A673 (cell line): ENCODE measurements at regions of chr4 and their contacts with region 1.

Region 1: DNA sequence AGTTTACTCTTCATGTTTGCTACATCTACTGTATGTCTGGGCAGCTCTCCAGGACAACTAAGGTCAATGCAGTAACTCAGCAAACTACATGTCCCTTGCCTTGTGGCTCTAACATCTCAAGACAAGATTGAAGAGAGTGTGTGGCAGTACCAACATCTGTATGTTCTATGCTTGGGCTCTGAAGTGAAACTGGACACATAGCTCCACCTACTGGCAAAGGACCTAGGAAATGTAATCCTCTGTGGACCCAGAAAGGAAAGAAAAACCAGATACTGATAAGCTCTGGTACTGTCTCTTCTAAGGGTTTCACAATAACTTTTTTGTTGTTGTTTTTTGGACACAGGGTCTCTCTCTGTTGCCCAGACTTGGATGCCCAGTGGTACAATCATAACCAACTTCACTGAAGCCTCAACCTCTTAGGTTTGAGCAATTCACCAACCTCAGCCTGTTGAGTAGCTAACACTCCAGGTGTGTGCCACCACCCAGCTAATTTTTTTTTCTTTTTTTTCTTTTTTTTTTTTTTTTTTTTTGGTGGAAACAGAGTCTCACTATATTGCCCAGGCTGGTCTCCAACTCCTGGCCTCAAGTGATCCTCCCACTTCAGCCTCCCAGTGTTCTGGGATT is 64.1 kb downstream of the QDPR start:
- DNase-seq: peak; percentile 86
- H3K4me3 ChIP-seq: no peak overlapping the region
- H3K27ac ChIP-seq: no peak overlapping the region
- H3K4me1 ChIP-seq: no peaks in the 10 kb centered on the region
- H3K27me3 ChIP-seq: no peaks in the 10 kb centered on the region
- CTCF ChIP-seq: peak; percentile 82

Region 2: DNA sequence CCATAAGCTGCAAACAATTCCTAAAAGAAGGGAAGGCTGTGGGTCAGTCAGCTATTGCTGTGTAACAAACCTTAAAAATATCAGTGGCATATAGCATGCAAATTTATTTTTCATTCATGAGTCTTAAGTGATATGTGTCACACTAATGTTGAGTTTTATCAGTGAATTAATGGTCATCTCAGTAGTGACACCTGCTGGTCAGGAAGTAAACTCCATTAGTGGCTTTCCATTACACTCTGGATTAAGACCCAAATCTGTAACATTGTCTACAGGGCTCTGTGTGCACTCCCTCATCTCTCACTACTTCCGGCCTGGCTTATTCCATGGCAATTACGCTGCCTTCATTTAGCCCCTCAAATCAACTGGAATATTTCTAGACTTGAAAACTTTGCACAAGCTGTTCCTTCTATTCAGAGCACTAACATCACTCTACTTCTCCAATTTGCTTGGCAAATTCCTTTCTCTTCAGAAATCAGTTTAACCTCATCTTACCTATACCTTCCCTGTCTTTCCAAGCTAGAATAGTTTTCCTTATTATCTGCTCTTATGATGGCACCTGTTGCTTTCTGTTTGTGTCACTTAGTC is 1004.2 kb before region 1 on chr4:
- CTCF ChIA-PET with region 1: no interaction called
- POLR2A ChIA-PET with region 1: interaction called, 3 read pairs
- intact Hi-C with region 1: loop called (anchors 10 kb)
- DNase-seq: peak; percentile 74
- H3K4me3 ChIP-seq: no peak overlapping the region
- H3K27ac ChIP-seq: no peak overlapping the region
- H3K4me1 ChIP-seq: no peaks in the 10 kb centered on the region
- H3K27me3 ChIP-seq: no peaks in the 10 kb centered on the region
- CTCF ChIP-seq: peak; percentile 74

Region 3: GRCh38 chr4:16785793-16786527 is 661.8 kb before region 1 on chr4:
- CTCF ChIA-PET with region 1: no interaction called
- POLR2A ChIA-PET with region 1: no interaction called
- intact Hi-C with region 1: loop called (anchors 10 kb)
- DNase-seq: peak; percentile 69
- H3K4me3 ChIP-seq: no peak overlapping the region
- H3K27ac ChIP-seq: no peak overlapping the region
- H3K4me1 ChIP-seq: peaks cover 37% of the 10 kb centered on the region
- H3K27me3 ChIP-seq: no peaks in the 10 kb centered on the region
- CTCF ChIP-seq: no peak

Region 4: GRCh38 chr4:17332478-17332877 is 115.3 kb before region 1 on chr4:
- CTCF ChIA-PET with region 1: no interaction called
- POLR2A ChIA-PET with region 1: no interaction called
- intact Hi-C with region 1: loop called (anchors 5 kb)
- DNase-seq: peak; percentile 14
- H3K4me3 ChIP-seq: no peak overlapping the region
- H3K27ac ChIP-seq: no peak overlapping the region
- H3K4me1 ChIP-seq: no peaks in the 10 kb centered on the region
- H3K27me3 ChIP-seq: no peaks in the 10 kb centered on the region
- CTCF ChIP-seq: peak; percentile 33; the same call in 1 of the 2 replicates

Region 5: DNA sequence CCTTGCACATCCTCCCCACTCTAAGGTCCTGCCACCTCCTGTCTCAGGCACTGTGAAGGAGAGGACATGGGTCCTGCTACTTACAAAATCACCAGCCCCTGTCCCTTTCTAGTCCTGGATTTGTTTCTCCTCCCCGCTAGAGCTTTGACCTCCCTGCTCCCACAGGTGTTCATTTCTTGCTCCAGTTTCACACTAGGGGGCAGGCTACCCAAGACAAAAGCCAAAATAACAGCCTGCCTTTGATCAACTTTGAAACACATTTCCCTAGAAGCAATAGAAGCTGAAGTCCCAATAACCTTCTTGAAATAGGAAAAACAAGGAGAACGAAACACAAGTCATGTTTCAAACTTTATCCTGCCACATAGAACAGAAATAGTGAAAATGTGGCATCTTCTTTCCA is 100.3 kb before region 1 on chr4:
- CTCF ChIA-PET with region 1: interaction called, 4 read pairs
- POLR2A ChIA-PET with region 1: no interaction called
- intact Hi-C with region 1: loop called (anchors 5 kb)
- DNase-seq: peak; percentile 45
- H3K4me3 ChIP-seq: no peak overlapping the region
- H3K27ac ChIP-seq: no peak overlapping the region
- H3K4me1 ChIP-seq: no peaks in the 10 kb centered on the region
- H3K27me3 ChIP-seq: no peaks in the 10 kb centered on the region
- CTCF ChIP-seq: peak; percentile 73